Activated T-helper 1 cell treated with anti-CD3 and anti-CD28 coated beads, Interleukin-12 subunit alpha, Interleukin-12 subunit beta, Interleukin-2, Interleukin-4 antibody, amounts not matched to agents 30 ng/mL and 10 ng/mL and 1 ng/mL, durations not matched to agents 14 hours and 24 hours and 36 hours (primary cell): ENCODE measurements at regions of chr13 and their contacts with region 1.

Region 1: DNA sequence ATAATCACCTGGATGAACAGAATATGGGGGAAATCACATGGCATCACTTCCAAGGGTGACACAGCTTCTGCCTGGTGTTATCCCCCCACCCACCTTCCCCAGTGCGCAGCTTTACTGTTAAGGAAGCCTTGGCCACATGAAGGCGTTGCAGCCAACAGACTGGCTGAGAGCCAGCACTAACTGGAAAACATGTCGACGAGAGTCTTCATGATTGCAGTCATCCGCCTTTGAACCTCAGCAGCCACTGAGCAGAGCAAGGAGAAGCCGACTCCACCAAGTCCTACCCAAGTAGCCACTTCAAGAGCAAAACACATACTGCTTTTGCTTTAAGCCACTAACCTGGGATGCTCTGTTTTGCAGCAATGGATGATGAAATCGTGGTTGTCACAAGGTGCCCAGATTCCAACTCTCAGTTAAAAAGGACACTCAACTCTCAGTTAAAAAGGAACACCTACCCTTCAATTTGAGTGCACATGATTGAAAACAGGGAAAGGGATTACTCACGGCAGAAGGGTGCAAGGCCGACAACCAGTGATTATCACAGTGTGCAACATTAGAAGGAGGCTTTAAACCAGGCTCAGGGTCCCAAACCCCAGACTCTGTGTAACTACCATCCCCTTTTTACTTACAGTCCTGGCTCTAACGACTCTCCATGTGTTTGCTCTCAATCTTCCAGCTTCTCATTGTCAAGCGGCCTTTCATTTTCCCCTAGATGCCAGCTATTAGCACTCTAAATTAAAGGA is 149.1 kb downstream of the KLF12 start:
- DNase-seq: peak; percentile 48
- H3K4me3 Mint-ChIP-seq: peak overlapping the region; percentile 69
- H3K27ac Mint-ChIP-seq: peak overlapping the region; percentile 79
- H3K4me1 Mint-ChIP-seq: peaks cover 36% of the 10 kb centered on the region
- H3K27me3 Mint-ChIP-seq: no peaks in the 10 kb centered on the region

Region 2: GRCh38 chr13:73943137-73943964 is 41.8 kb before region 1 on chr13:
- intact Hi-C with region 1: loop called (anchors 2 kb)
- DNase-seq: no peak
- H3K4me3 Mint-ChIP-seq: no peak overlapping the region
- H3K27ac Mint-ChIP-seq: no peak overlapping the region
- H3K4me1 Mint-ChIP-seq: peaks cover 41% of the 10 kb centered on the region
- H3K27me3 Mint-ChIP-seq: no peaks in the 10 kb centered on the region

Region 3: GRCh38 chr13:74026753-74027152 is 41.6 kb after region 1 on chr13:
- intact Hi-C with region 1: loop called (anchors 5 kb)
- DNase-seq: peak; percentile 51
- H3K4me3 Mint-ChIP-seq: peak overlapping the region; percentile 57
- H3K27ac Mint-ChIP-seq: peak overlapping the region; percentile 67
- H3K4me1 Mint-ChIP-seq: peaks cover 28% of the 10 kb centered on the region
- H3K27me3 Mint-ChIP-seq: no peaks in the 10 kb centered on the region

Region 4: GRCh38 chr13:74062933-74063332 is 77.8 kb after region 1 on chr13:
- intact Hi-C with region 1: loop called (anchors 2 kb)
- DNase-seq: no peak
- H3K4me3 Mint-ChIP-seq: peak overlapping the region; percentile 83
- H3K27ac Mint-ChIP-seq: peak overlapping the region; percentile 92
- H3K4me1 Mint-ChIP-seq: peaks cover 60% of the 10 kb centered on the region
- H3K27me3 Mint-ChIP-seq: no peaks in the 10 kb centered on the region

Region 5: GRCh38 chr13:74128156-74128767 is 143.1 kb after region 1 on chr13:
- intact Hi-C with region 1: loop called (anchors 1 kb)
- DNase-seq: no peak
- H3K4me3 Mint-ChIP-seq: no peak overlapping the region
- H3K27ac Mint-ChIP-seq: peak overlapping the region; percentile 71
- H3K4me1 Mint-ChIP-seq: peaks cover 62% of the 10 kb centered on the region
- H3K27me3 Mint-ChIP-seq: no peaks in the 10 kb centered on the region

Region 6: DNA sequence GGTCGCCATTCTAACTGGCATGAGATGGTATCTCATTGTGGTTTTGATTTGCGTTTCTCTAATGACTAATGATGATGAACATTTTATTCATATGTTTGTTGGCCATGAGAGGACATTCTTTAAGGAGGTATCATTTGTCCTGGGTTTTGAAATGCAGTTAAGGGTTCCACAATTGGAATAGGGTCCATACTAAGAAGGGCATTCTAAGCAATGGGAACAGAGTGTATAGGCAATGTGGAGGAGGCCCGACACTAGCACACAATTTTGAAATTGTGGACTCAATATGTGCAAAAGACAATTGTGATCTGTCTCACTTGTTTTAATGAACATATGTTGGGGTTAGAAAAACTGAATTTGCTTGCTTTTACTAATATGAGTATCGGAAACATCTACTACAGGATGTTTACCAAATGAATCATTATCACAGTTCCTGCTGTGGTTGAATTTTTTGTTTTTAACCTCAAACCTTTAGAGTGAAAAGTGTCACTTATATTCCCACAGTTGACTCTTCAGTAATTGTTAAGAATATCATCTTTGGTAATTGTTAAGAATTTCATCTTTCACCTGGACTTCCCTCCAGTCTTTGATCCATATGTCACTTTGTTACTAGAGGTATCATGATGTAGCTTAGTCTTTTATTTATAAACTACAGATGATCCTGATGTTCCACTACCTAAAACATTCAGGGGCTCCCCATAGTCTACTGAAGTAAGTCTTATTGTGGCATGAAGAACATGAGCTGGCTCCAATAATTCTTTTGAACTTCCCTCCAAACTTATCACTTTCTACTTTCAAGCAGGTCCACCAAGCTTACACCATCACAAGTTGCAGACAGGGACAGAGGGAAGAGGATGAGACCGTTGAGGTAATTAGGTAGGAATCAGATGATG is 258.8 kb after region 1 on chr13:
- intact Hi-C with region 1: loop called (anchors 5 kb)
- DNase-seq: no peak
- H3K4me3 Mint-ChIP-seq: peak overlapping the region; percentile 60
- H3K27ac Mint-ChIP-seq: peak overlapping the region; percentile 82
- H3K4me1 Mint-ChIP-seq: peaks cover 32% of the 10 kb centered on the region
- H3K27me3 Mint-ChIP-seq: peaks cover 2% of the 10 kb centered on the region